GM18951 (cell line): ENCODE measurements at regions of chr6 and their contacts with region 1.

Region 1: GRCh38 chr6:45922728-45923351 is 92.8 kb downstream of the CLIC5 start:
- POLR2A ChIP-seq: no peak

Region 2: GRCh38 chr6:44475779-44476434 is 1446.9 kb before region 1 on chr6:
- in situ Hi-C with region 1: loop called (anchors 25 kb)
- POLR2A ChIP-seq: no peak

Region 3: GRCh38 chr6:44630125-44631028 is 1292.5 kb before region 1 on chr6:
- in situ Hi-C with region 1: loop called (anchors 25 kb)
- POLR2A ChIP-seq: no peak

Region 4: DNA sequence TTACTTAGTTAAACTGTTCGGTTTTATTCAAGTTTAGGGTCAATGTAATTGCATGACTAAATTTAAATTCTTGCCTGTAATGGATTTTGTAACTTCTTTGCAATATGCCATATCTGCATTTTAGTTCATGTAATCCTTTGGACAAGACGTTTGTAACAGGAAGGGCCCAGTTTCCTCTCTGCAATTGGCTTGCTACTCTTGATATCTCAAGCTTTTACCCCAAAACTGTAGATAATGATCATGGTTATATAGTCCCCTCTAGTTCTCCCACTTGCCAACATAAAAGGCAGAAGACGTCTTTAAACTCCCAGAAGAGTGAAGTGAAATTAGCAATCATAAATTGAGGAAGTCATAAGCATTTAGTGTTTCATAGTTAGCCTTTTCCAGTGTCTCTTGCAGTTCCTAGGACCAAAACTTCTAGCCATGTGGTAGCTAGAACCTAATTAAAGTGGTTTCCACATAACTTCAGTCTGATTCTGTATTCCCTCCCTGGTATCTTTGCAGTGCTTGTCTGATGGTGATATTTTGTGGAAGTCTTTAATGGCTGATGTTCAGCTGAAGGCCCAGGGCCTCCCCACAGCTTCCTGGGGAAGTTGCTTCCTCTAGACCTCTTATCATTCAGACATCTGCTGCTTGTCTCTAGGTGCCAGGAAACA is 427.3 kb before region 1 on chr6:
- in situ Hi-C with region 1: no loop called
- POLR2A ChIP-seq: no peak

Region 5: GRCh38 chr6:45538641-45539547 is 383.9 kb before region 1 on chr6:
- in situ Hi-C with region 1: no loop called
- POLR2A ChIP-seq: no peak